ENCODE measurements at regions of chr11 and their contacts with region 1.

Region 1: DNA sequence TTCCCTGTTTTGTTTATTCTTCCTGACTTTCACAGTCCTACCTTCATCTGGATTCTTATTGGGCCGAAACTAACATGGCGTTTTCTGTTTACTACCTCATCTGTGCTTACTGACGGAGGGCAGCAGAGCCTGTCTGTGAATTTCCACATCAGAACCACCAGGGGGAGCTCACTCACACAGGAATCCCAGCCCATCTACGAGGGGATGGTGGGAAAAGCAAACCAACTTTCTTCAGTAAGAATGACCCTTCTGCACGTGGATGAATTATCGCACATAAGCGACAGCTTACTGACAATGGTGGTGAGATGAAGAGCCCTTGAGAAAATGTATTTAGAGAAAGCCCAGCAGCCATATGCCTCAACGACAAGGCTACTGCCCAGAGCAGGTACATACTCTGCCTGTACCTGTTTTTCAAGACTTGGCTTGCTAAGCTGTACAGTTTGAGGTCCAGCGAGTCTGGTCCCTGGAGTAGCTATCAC is 42.5 kb downstream of the LARGE2 start:
- DNase-seq: peak; percentile 66
- H3K4me3 ChIP-seq: no peak overlapping the region
- H3K27ac ChIP-seq: no peak overlapping the region
- H3K27me3 ChIP-seq: no peaks in the 10 kb centered on the region
- CTCF ChIP-seq: peak; percentile 91

Region 2: DNA sequence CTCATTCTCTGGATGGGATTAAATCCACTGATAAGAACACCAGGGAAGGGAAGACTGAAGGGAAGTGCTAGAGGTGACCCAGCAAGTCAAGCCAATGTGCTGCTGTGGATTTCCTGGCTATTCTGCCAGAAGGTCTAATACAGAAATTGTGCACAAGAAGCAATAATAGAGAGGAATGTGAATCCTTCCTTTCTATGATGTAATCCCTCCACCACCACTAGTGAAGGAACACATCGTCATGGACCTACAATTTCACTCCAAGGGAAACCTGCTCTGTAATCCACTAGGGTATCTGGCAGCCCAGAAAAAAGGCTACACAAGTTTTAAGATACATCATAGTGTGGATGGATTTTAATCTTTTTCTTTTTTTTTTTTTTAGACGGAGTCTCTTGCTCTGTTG is 25.1 kb before region 1 on chr11:
- CTCF ChIA-PET with region 1: interaction called, 14 read pairs
- POLR2A ChIA-PET with region 1: no interaction called
- DNase-seq: no peak
- H3K4me3 ChIP-seq: no peak overlapping the region
- H3K27ac ChIP-seq: no peak overlapping the region
- H3K27me3 ChIP-seq: no peaks in the 10 kb centered on the region
- CTCF ChIP-seq: no peak

Region 3: GRCh38 chr11:45982656-45983470 is 17.9 kb after region 1 on chr11:
- CTCF ChIA-PET with region 1: interaction called, 58 read pairs
- POLR2A ChIA-PET with region 1: no interaction called
- DNase-seq: peak; percentile 72
- H3K4me3 ChIP-seq: no peak overlapping the region
- H3K27ac ChIP-seq: peak overlapping the region; percentile 41
- H3K27me3 ChIP-seq: no peaks in the 10 kb centered on the region
- CTCF ChIP-seq: no peak

Region 4: GRCh38 chr11:46006418-46007070 is 41.6 kb after region 1 on chr11:
- CTCF ChIA-PET with region 1: interaction called, 127 read pairs
- POLR2A ChIA-PET with region 1: interaction called, 6 read pairs
- DNase-seq: peak; percentile 66
- H3K4me3 ChIP-seq: no peak overlapping the region
- H3K27ac ChIP-seq: no peak overlapping the region
- H3K27me3 ChIP-seq: no peaks in the 10 kb centered on the region
- CTCF ChIP-seq: peak; percentile 81

Region 5: DNA sequence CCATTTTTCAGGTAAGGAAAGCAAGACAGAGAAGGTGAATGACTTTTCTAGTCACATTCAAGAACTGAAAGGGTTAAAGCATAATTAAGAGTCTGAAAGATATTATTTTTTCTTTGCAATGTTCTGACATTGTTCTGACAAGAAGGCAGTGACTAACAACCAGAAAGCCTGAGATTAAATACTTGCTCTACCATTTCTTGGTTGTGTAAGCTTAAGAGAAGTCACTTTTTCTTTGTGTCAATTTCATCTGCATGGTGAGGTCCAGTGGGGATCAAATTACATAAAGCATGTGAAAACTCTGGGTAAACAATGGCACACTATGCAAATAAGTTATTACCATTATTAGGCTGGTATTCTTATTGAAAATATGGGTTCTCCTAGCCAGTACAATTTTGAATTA is 82.6 kb after region 1 on chr11:
- CTCF ChIA-PET with region 1: interaction called, 10 read pairs
- POLR2A ChIA-PET with region 1: no interaction called
- DNase-seq: no peak
- H3K4me3 ChIP-seq: no peak overlapping the region
- H3K27ac ChIP-seq: no peak overlapping the region
- H3K27me3 ChIP-seq: no peaks in the 10 kb centered on the region
- CTCF ChIP-seq: no peak

Region 6: DNA sequence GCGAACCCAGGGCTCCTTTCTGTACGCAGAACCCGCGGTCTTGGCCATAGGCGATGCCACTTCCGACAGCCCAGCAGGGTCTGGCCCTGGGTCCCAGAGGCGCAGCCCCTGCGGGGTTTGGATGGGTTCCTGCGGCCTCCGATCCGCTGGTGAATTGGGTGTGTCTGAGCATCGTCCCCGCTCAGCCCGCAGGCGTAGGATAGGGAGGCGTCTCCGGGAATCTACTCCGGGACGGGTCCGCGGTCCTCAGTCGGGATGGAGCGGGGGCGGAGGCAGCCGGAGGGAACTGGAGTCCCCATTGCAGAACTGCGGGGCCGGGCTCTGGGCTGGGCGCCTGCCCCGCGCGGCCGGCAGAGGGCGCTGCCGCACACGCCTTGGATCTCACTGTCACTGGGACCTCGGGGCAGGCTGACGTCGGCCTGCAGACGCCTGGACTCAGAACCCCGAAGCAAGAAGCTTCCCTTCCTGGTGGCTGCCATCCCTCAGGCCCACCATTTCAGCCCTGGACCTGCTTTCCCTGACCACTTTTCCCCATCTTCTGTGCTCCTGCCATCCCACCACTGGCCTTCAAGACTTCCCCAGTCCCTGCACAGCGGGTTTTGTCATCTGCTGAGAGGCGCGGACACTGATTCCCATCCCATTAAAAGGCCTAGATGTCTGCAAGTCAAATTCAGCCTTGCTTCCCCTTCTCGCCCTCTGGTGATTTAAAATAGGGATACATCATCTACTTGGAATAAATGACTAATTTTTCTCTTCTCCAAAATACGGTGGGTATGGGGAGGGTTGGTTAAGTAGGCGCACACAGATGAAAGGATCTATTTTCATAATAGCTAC is 274.2 kb after region 1 on chr11:
- CTCF ChIA-PET with region 1: interaction called, 19 read pairs
- POLR2A ChIA-PET with region 1: no interaction called
- DNase-seq: peak; percentile 60
- H3K4me3 ChIP-seq: peak overlapping the region; percentile 56
- H3K27ac ChIP-seq: peak overlapping the region; percentile 73
- H3K27me3 ChIP-seq: no peaks in the 10 kb centered on the region
- CTCF ChIP-seq: peak; percentile 87

Measured in AG04450 (cell line).